SK-N-SH (cell line): ENCODE measurements at regions of chr2 and their contacts with region 1.

Region 1: DNA sequence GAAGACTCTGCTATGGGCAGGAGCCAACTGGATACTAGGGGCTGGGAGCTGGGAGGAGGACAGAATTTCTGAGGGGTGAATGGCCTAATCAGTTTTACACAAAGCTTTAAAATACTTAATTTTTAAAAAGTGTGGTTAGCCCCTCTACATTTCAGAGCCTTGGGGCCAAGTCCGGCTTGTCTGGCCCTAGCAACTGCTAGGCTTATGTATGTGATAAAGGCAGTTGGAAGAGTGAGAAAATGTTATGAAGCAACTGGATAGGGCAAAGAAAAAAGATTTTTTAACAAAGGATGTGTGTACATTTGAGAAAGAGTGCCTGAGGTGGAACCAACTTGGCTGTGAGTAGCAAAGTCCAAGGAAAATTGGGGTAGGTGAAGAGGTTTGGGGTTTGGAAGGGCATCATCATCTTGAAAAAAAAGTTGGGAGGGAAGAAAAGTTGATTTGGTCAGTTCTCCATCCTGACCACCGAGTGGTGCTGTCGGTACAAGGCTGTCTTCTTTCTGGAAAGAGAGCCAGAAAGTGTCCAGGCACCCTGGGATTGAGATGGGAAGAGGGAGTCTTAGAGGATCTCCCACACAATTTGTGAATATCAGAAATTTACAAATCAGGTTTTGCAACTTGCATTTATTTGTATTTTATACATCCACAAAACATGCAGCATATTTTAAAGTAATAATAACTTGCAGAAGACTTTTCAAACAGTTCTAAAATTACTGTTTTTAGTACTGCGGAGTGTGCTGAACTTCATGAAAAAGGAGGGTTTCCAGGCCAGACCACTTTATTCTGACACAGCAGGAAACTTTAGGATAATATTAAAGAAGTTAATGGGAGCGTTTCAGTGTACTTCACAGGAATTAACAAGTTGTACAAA is 10.5 kb upstream of the CDK15 start:
- DNase-seq: peak; percentile 77
- H3K4me3 ChIP-seq: no peak overlapping the region; a peak in 1 of 4 replicates
- H3K27ac ChIP-seq: peak overlapping the region; percentile 3 to 99; a peak in 3 of 4 replicates
- H3K4me1 ChIP-seq: peaks cover 0 to 22% of the 10 kb centered on the region in 2 experiments; a peak in 2 of 4 replicates
- H3K27me3 ChIP-seq: no peaks in the 10 kb centered on the region
- CTCF ChIP-seq: peak; percentile 83
- EP300 ChIP-seq: no peak
- RAD21 ChIP-seq: peak; percentile 95

Region 2: GRCh38 chr2:201642579-201643215 is 153.1 kb before region 1 on chr2:
- CTCF ChIA-PET with region 1: no interaction called
- POLR2A ChIA-PET with region 1: no interaction called
- DNase-seq: peak; percentile 96
- H3K4me3 ChIP-seq: peak overlapping the region; percentile 77 to 89
- H3K27ac ChIP-seq: peak overlapping the region; percentile 85 to 96
- H3K4me1 ChIP-seq: peaks cover 12 to 15% of the 10 kb centered on the region in 2 experiments; a peak in 3 of 4 replicates
- H3K27me3 ChIP-seq: no peaks in the 10 kb centered on the region
- CTCF ChIP-seq: no peak
- EP300 ChIP-seq: peak in 1 of 2 experiments; percentile 10; a peak in 1 of 4 replicates
- RAD21 ChIP-seq: peak; percentile 13; the same call in 1 of the 2 replicates

Region 3: GRCh38 chr2:201807452-201807999 is 11.7 kb after region 1 on chr2:
- CTCF ChIA-PET with region 1: interaction called, 11 read pairs
- POLR2A ChIA-PET with region 1: no interaction called
- DNase-seq: peak; percentile 36
- H3K4me3 ChIP-seq: no peak overlapping the region
- H3K27ac ChIP-seq: peak overlapping the region; percentile 58 to 76
- H3K4me1 ChIP-seq: peaks cover 17 to 18% of the 10 kb centered on the region in 2 experiments
- H3K27me3 ChIP-seq: no peaks in the 10 kb centered on the region
- CTCF ChIP-seq: no peak
- EP300 ChIP-seq: no peak
- RAD21 ChIP-seq: no peak